A549 (cell line): ENCODE measurements at regions of chr15 and their contacts with region 1.

Region 1: GRCh38 chr15:65318870-65319356 is 14.4 kb downstream of the RNU5B-1 start:
- DNase-seq: peak; percentile 83 to 97
- ATAC-seq: peak; percentile 96 to 98
- H3K4me3 ChIP-seq: no peak overlapping the region
- H3K27ac ChIP-seq: no peak overlapping the region
- H3K4me1 ChIP-seq: no peaks in the 10 kb centered on the region
- CTCF ChIP-seq: peak; percentile 98
- EP300 ChIP-seq: no peak
- POLR2A ChIP-seq: no peak
- RAD21 ChIP-seq: peak; percentile 99

Region 2: GRCh38 chr15:65304389-65305144 is 14.3 kb before region 1 on chr15 and contains the start of gene RNU5B-1:
- CTCF ChIA-PET with region 1: interaction called, 85 read pairs
- POLR2A ChIA-PET with region 1: interaction called, 20 read pairs
- DNase-seq: peak; percentile 84 to 98
- ATAC-seq: peak; percentile 83 to 86
- H3K4me3 ChIP-seq: peak within 1 kb of the TSS; percentile 56
- H3K27ac ChIP-seq: peak within 1 kb of the TSS; percentile 85 to 91
- H3K4me1 ChIP-seq: peaks cover 23% of the 10 kb centered on the region
- CTCF ChIP-seq: no peak; the same call in 1 of the 3 replicates
- EP300 ChIP-seq: peak in 1 of 2 experiments; percentile 44; a peak in 1 of 5 replicates
- POLR2A ChIP-seq: peak; percentile 100
- RAD21 ChIP-seq: 0 out of 5 replicates have a peak, but pooled peaks of 1 of the 2 experiments have one; percentile 13
- polyA plus RNA-seq, gene RNU5B-1: not detected in 2 replicates

Region 3: DNA sequence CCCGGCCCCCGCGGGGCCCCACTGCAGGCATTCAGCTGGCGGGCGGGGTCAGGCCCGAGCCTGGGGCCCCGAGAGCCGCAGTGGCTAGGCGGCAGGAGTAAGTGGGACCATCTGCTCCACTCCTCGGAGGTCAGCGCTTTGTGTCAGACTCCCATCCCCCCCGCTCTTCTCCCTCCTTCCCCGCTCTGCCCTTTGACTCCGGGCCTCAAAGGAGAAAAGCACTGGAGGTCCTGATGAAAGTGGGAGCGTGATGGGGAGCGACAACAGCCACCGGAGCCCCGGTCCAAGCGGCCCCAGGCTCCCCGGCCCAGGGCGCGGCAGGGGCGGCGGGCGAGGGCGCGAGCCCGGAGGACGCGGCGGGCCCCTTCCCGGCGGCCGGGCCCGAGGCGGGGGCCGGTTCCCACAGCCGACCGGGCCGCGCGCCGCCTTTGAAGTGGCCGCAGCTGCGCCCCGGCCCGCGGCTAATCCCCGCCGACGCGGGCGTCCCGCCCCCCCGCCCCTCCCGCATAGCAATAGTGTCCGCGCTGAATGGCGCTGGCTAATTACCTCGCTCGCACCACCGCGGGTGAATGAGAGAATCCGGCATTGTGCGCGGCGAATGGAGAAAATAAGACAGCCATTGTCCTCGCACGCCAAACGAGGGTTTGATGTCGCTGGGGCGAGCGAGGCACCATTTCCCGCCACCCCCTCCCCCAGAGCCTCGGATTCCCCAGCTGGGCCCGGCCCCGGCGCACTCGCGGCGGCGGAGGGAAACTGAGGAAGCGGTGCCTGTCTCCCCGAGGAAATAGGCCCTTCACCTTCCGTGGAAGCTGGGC is 36.5 kb after region 1 on chr15:
- CTCF ChIA-PET with region 1: interaction called, 26 read pairs
- POLR2A ChIA-PET with region 1: no interaction called
- DNase-seq: no peak
- ATAC-seq: peak; percentile 37 to 55; a peak in 4 of 6 replicates
- H3K4me3 ChIP-seq: peak overlapping the region; percentile 51
- H3K27ac ChIP-seq: peak overlapping the region; percentile 26 to 78; a peak in 4 of 6 replicates
- H3K4me1 ChIP-seq: no peaks in the 10 kb centered on the region
- CTCF ChIP-seq: no peak
- EP300 ChIP-seq: no peak
- POLR2A ChIP-seq: no peak
- RAD21 ChIP-seq: no peak

Region 4: GRCh38 chr15:65368302-65369211 is 49.6 kb after region 1 on chr15:
- CTCF ChIA-PET with region 1: interaction called, 68 read pairs
- POLR2A ChIA-PET with region 1: interaction called, 4 read pairs
- DNase-seq: no peak
- ATAC-seq: no peak
- H3K4me3 ChIP-seq: no peak overlapping the region
- H3K27ac ChIP-seq: no peak overlapping the region
- H3K4me1 ChIP-seq: no peaks in the 10 kb centered on the region
- CTCF ChIP-seq: no peak
- EP300 ChIP-seq: no peak
- POLR2A ChIP-seq: no peak
- RAD21 ChIP-seq: no peak

Region 5: GRCh38 chr15:65384895-65385858 is 66.3 kb after region 1 on chr15:
- CTCF ChIA-PET with region 1: interaction called, 722 read pairs
- POLR2A ChIA-PET with region 1: interaction called, 3 read pairs
- DNase-seq: peak; percentile 89 to 94
- ATAC-seq: peak; percentile 85 to 94
- H3K4me3 ChIP-seq: peak overlapping the region; percentile 31
- H3K27ac ChIP-seq: peak overlapping the region; percentile 63 to 77
- H3K4me1 ChIP-seq: peaks cover 12% of the 10 kb centered on the region; the same call in 2 of the 3 replicates
- CTCF ChIP-seq: peak; percentile 93
- EP300 ChIP-seq: no peak
- POLR2A ChIP-seq: no peak
- RAD21 ChIP-seq: peak; percentile 93 to 97